CD8-positive, alpha-beta T cell (primary cell): ENCODE measurements at regions of chr20 and their contacts with region 1.

Region 1: GRCh38 chr20:11958855-11959254 is 41.2 kb downstream of the BTBD3 start:
- DNase-seq: no peak
- ATAC-seq: no peak
- H3K4me3 ChIP-seq: no peak overlapping the region
- H3K4me3 Mint-ChIP-seq: no peak overlapping the region
- H3K27ac ChIP-seq: no peak overlapping the region
- H3K27ac Mint-ChIP-seq: no peak overlapping the region
- H3K4me1 ChIP-seq: no peaks in the 10 kb centered on the region
- H3K4me1 Mint-ChIP-seq: no peaks in the 10 kb centered on the region
- H3K27me3 ChIP-seq: no peaks in the 10 kb centered on the region
- H3K27me3 Mint-ChIP-seq: no peaks in the 10 kb centered on the region
- CTCF ChIP-seq: no peak

Region 2: GRCh38 chr20:11890331-11891080 is 68.3 kb before region 1 on chr20:
- CTCF ChIA-PET with region 1: no interaction called
- POLR2A ChIA-PET with region 1: no interaction called
- intact Hi-C with region 1: loop called in 1 of 2 experiments (anchors 10 kb)
- DNase-seq: peak in 7 of 9 experiments; percentile 9 to 57 (median 17)
- ATAC-seq: peak; percentile 31
- H3K4me3 ChIP-seq: peak overlapping the region in 1 of 2 experiments; percentile 7
- H3K4me3 Mint-ChIP-seq: peak overlapping the region; percentile 83
- H3K27ac ChIP-seq: no peak overlapping the region
- H3K27ac Mint-ChIP-seq: no peak overlapping the region
- H3K4me1 ChIP-seq: no peaks in the 10 kb centered on the region
- H3K4me1 Mint-ChIP-seq: peaks cover 17% of the 10 kb centered on the region
- H3K27me3 ChIP-seq: peaks cover 0 to 2% of the 10 kb centered on the region in 2 experiments
- H3K27me3 Mint-ChIP-seq: peaks cover 23% of the 10 kb centered on the region
- CTCF ChIP-seq: no peak

Region 3: DNA sequence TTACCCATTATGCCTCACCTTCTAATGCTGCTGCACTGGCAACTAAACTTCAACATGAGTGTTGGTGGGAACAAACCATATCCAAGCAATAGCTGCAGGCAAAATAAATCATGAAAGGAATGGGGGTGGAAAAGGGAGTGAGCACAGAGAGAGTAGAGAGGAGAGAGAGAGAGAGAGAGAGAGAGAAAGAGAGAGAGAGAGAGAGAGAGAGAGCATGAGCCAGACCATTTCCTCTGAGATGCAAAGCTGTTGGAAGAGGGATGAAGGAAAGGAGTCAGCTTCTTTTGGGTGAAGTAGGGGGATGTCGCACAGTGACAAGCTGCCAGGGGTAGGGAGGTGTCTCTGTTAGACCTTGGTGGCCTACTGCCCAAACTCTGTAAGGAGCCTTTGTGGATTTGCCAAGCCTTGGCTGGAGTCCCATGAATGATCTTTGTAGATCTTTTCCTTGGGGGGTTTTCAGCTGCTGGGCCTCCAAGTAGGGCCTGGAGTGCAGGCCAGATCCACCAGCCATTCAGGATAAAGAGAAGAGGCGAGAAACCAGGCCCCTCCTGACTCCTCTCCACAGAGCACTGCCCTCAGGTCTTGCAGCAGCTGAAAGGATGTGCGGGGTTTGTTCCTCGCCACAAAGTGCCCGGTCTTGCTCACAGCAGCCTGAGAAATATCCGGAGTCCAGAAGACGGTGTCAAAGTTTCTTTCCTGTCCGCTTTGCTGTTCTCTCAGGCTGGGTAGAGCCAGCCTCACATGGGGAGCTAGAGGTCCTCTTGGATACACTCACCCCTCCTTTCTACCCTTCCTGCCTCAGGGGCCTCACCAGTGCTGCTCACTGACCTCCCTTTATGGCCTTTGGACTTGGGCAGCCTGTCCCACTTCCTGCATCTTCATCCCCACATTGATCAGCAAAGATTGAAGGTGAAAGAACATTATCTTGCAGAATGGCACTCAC is 23.4 kb before region 1 on chr20:
- CTCF ChIA-PET with region 1: no interaction called
- POLR2A ChIA-PET with region 1: no interaction called
- intact Hi-C with region 1: no loop called
- DNase-seq: no peak
- ATAC-seq: no peak
- H3K4me3 ChIP-seq: no peak overlapping the region
- H3K4me3 Mint-ChIP-seq: no peak overlapping the region
- H3K27ac ChIP-seq: no peak overlapping the region
- H3K27ac Mint-ChIP-seq: no peak overlapping the region
- H3K4me1 ChIP-seq: no peaks in the 10 kb centered on the region
- H3K4me1 Mint-ChIP-seq: no peaks in the 10 kb centered on the region
- H3K27me3 ChIP-seq: no peaks in the 10 kb centered on the region
- H3K27me3 Mint-ChIP-seq: no peaks in the 10 kb centered on the region
- CTCF ChIP-seq: no peak